Transverse colon (tissue), 4 donors: ENCODE measurements at regions of chr6 and their contacts with region 1.

Region 1: GRCh38 chr6:106556368-106556960 is 72.8 kb downstream of the RTN4IP1 start:
- DNase-seq: no peak
- H3K4me3 ChIP-seq: no peak overlapping the region
- H3K27ac ChIP-seq: no peak overlapping the region
- H3K4me1 ChIP-seq: no peaks in the 10 kb centered on the region
- H3K27me3 ChIP-seq: no peaks in the 10 kb centered on the region
- CTCF ChIP-seq: peak; percentile 11 to 30 (median 23)
- EP300 ChIP-seq: no peak
- POLR2A ChIP-seq: no peak

Region 2: GRCh38 chr6:105431226-105431625 is 1125.2 kb before region 1 on chr6:
- in situ Hi-C with region 1: loop called in 1 of 4 experiments (anchors 25 kb)
- intact Hi-C with region 1: no loop called
- DNase-seq: no peak
- H3K4me3 ChIP-seq: no peak overlapping the region
- H3K27ac ChIP-seq: no peak overlapping the region
- H3K4me1 ChIP-seq: no peaks in the 10 kb centered on the region
- H3K27me3 ChIP-seq: no peaks in the 10 kb centered on the region
- CTCF ChIP-seq: peak; percentile 37 to 60 (median 53)
- EP300 ChIP-seq: no peak
- POLR2A ChIP-seq: no peak

Region 3: GRCh38 chr6:106325336-106326178 is 230.9 kb before region 1 on chr6 and contains the start of gene ATG5:
- in situ Hi-C with region 1: loop called in 3 of 4 experiments (anchors 10 to 25 kb)
- intact Hi-C with region 1: no loop called
- DNase-seq: peak; percentile 100
- H3K4me3 ChIP-seq: peak within 1 kb of the TSS; percentile 50 to 70 (median 66)
- H3K27ac ChIP-seq: peak within 1 kb of the TSS; percentile 89 to 92 (median 90)
- H3K4me1 ChIP-seq: peaks cover 10 to 14% (median 14%) of the 10 kb centered on the region in 4 donors
- H3K27me3 ChIP-seq: no peaks in the 10 kb centered on the region
- CTCF ChIP-seq: no peak
- EP300 ChIP-seq: no peak
- POLR2A ChIP-seq: peak; percentile 96
- total RNA-seq, gene ATG5: 21.7 to 56.4 (median 44.9) TPM

Region 4: DNA sequence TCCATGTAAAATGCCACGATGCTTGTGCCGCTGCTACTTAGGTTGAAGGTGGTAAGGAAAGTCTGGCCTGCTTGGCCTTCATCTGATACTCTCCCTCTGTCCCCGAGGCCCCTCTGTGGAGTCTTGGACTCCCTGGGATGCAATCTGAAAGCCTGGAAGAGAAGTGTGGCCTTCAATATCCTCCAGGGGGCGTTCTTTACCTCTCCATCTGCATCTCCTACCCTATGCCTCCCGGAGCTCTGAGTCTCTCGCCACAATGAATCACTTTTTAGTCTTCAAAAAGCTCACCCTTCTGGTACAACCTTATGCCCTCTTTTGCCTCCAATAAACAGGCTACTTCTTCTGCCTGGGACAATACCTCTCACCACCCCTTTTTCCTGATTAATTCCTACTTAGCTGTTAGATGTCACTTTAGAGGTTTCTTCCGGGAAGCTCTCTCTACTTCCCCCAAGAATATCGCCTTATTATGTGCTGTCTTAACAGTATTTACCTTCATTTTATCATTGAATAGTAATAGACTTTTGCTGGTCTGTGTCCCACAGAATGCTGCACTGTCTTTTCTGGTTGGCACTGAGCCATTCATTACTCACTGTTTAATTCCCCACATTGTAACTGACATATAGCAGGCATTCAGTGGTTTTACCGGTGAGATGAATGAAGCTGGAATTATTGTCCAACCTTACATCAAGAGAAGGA is 217.0 kb before region 1 on chr6:
- in situ Hi-C with region 1: loop called (anchors 10 to 25 kb)
- intact Hi-C with region 1: loop called (anchors 5 kb)
- DNase-seq: peak; percentile 49
- H3K4me3 ChIP-seq: no peak overlapping the region
- H3K27ac ChIP-seq: no peak overlapping the region
- H3K4me1 ChIP-seq: peaks cover 0 to 3% (median 1%) of the 10 kb centered on the region in 4 donors
- H3K27me3 ChIP-seq: no peaks in the 10 kb centered on the region
- CTCF ChIP-seq: peak; percentile 60 to 73 (median 70)
- EP300 ChIP-seq: no peak
- POLR2A ChIP-seq: no peak